Left cardiac atrium (tissue), 4 donors: ENCODE measurements at regions of chr7 and their contacts with region 1.

Region 1: GRCh38 chr7:100132697-100133151 is 6.0 kb downstream of the MBLAC1 start:
- DNase-seq: no peak
- ATAC-seq: peak; percentile 72 to 75

Region 2: DNA sequence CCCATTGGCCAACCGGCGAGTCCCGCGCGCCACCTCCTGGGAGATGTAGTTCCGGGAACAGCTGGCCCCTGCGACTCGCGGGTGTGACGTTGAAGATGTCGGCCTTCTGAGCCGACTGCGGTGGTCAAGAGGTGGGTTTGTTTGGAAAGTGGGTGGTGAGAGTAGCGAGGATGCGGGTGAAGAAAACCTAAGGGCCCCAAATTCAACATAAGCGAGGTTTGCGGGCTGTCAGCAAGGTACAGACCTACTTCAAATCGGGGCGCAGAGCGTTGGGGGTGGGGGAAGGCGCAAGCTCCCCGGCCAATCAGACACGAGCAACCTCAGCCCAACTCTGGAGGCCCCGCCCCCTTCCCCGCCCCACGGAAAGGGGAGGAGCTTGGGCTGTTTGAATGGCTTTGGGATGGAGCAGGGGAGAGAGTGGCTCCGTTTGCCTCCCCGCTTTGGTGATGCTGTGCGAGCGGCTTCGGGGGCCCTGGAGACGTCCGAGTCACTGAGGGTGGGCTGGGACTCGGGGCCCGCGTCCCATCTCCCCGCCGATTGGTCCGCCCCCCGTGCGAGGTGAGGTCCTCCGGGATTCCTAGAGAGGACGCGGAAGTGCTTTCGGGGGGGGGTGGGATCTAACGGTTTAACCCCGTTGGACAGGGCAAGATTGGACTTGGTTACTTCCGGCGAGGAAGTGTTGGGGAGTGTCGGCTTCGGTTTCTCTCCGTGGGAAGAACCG is 628.0 kb before region 1 on chr7 and contains the start of gene ZKSCAN5:
- intact Hi-C with region 1: no loop called
- DNase-seq: peak; percentile 99
- ATAC-seq: peak; percentile 94 to 96
- total RNA-seq, gene ZKSCAN5: 6.1 to 6.3 TPM

Region 3: DNA sequence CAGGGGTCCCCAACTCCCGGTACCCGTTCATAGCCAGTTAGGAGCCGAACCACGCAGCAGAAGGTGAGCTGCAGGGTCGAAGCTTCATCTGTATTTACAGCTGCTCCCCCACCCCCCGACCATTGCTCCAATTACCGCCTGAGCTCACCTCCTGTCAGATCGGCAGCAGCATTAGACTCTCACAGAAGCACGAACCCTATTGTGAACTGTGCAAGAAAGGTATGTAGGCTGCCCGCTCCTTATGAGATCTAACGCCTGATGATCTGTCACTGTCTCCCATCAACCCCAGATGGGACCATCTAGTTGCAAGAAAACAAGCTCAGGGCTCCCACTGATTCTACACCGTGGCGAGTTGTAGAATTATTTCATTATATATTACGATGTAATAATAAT is 142.3 kb before region 1 on chr7:
- intact Hi-C with region 1: loop called (anchors 5 to 10 kb)
- DNase-seq: no peak
- ATAC-seq: no peak

Region 4: GRCh38 chr7:99997545-99998137 is 135.1 kb before region 1 on chr7:
- intact Hi-C with region 1: loop called (anchors 5 to 10 kb)
- DNase-seq: peak; percentile 60
- ATAC-seq: peak; percentile 84 to 87

Region 5: GRCh38 chr7:100215895-100216294 is 83.2 kb after region 1 on chr7:
- intact Hi-C with region 1: loop called (anchors 5 to 10 kb)
- DNase-seq: no peak
- ATAC-seq: peak in 1 of 2 donors; percentile 4